Activated T-helper 1 cell treated with anti-CD3 and anti-CD28 coated beads, Interleukin-12 subunit alpha, Interleukin-12 subunit beta, Interleukin-2, Interleukin-4 antibody, amounts not matched to agents 30 ng/mL and 10 ng/mL and 1 ng/mL, durations not matched to agents 14 hours and 24 hours and 36 hours (primary cell): ENCODE measurements at regions of chr17 and their contacts with region 1.

Region 1: GRCh38 chr17:42577532-42578281 is at the start of gene PSMC3IP:
- DNase-seq: peak; percentile 92
- H3K4me3 Mint-ChIP-seq: peak within 1 kb of the TSS; percentile 98
- H3K27ac Mint-ChIP-seq: peak within 1 kb of the TSS; percentile 96
- H3K4me1 Mint-ChIP-seq: peaks cover 47% of the 10 kb centered on the region
- H3K27me3 Mint-ChIP-seq: no peaks in the 10 kb centered on the region
- total RNA-seq, gene PSMC3IP: 27.6 and 31.5 TPM in 2 replicates

Region 2: GRCh38 chr17:42428141-42428944 is 149.4 kb before region 1 on chr17:
- intact Hi-C with region 1: no loop called
- DNase-seq: peak; percentile 16
- H3K4me3 Mint-ChIP-seq: no peak overlapping the region
- H3K27ac Mint-ChIP-seq: no peak overlapping the region
- H3K4me1 Mint-ChIP-seq: no peaks in the 10 kb centered on the region
- H3K27me3 Mint-ChIP-seq: peaks cover 50% of the 10 kb centered on the region

Region 3: GRCh38 chr17:42536048-42536371 is 41.7 kb before region 1 on chr17 and contains the start of gene NAGLU:
- intact Hi-C with region 1: loop called (anchors 1 kb)
- DNase-seq: peak; percentile 85
- H3K4me3 Mint-ChIP-seq: peak within 1 kb of the TSS; percentile 90
- H3K27ac Mint-ChIP-seq: peak within 1 kb of the TSS; percentile 89
- H3K4me1 Mint-ChIP-seq: peaks cover 33% of the 10 kb centered on the region
- H3K27me3 Mint-ChIP-seq: peaks cover 16% of the 10 kb centered on the region
- total RNA-seq, gene NAGLU: 18.2 and 20.8 TPM in 2 replicates

Region 4: DNA sequence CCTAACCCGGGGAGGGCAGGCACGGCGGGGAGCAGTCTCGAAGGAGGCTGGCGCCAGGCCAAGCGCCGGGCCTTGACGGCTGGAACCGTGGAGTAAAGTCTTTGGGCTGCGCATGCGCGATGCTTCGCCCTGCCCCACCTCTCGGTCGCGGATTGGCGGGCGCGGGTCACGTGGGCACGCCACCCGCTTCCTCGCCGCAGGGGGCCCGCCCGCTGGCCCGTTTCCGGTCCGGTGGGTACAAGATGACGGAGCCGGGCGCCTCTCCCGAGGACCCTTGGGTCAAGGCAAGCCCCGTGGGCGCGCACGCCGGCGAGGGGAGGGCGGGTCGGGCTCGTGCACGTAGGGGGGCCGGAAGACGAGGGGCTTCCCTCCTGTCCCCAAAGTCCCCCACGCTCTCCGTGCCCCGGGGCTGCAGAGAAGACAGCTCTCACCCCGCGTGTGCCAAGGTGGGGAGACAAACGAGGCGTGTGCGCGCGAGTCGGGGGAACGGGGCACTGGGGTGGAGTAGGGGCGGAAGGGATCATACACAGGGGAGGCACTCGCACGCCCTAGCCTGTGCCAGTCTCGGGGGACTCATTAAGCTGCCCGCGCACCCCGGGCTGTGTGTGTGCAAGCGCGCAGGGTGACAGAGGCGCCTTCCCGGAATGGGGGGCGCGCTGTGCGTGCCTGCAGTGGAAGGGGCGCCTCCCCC is 10.7 kb before region 1 on chr17 and contains the start of gene MLX:
- intact Hi-C with region 1: loop called (anchors 1 kb)
- DNase-seq: peak; percentile 91
- H3K4me3 Mint-ChIP-seq: peak within 1 kb of the TSS; percentile 89
- H3K27ac Mint-ChIP-seq: peak within 1 kb of the TSS; percentile 87
- H3K4me1 Mint-ChIP-seq: peaks cover 36% of the 10 kb centered on the region
- H3K27me3 Mint-ChIP-seq: no peaks in the 10 kb centered on the region
- total RNA-seq, gene MLX: 74.1 and 75.4 TPM in 2 replicates

Region 5: GRCh38 chr17:42603318-42603717 is 25.6 kb after region 1 on chr17:
- intact Hi-C with region 1: no loop called
- DNase-seq: no peak
- H3K4me3 Mint-ChIP-seq: no peak overlapping the region
- H3K27ac Mint-ChIP-seq: no peak overlapping the region
- H3K4me1 Mint-ChIP-seq: peaks cover 39% of the 10 kb centered on the region
- H3K27me3 Mint-ChIP-seq: no peaks in the 10 kb centered on the region

Region 6: GRCh38 chr17:42720996-42721583 is 143.4 kb after region 1 on chr17:
- intact Hi-C with region 1: loop called (anchors 1 kb)
- DNase-seq: peak; percentile 9
- H3K4me3 Mint-ChIP-seq: no peak overlapping the region
- H3K27ac Mint-ChIP-seq: peak overlapping the region; percentile 22
- H3K4me1 Mint-ChIP-seq: peaks cover 5% of the 10 kb centered on the region
- H3K27me3 Mint-ChIP-seq: no peaks in the 10 kb centered on the region

Region 7: GRCh38 chr17:42760652-42761581 is 183.2 kb after region 1 on chr17 and contains the start of gene RAMP2:
- intact Hi-C with region 1: loop called (anchors 1 kb)
- DNase-seq: no peak
- H3K4me3 Mint-ChIP-seq: peak within 1 kb of the TSS; percentile 54
- H3K27ac Mint-ChIP-seq: no peak within 1 kb of the TSS
- H3K4me1 Mint-ChIP-seq: peaks cover 6% of the 10 kb centered on the region
- H3K27me3 Mint-ChIP-seq: peaks cover 55% of the 10 kb centered on the region
- total RNA-seq, gene RAMP2: not detected in 2 replicates

Region 8: DNA sequence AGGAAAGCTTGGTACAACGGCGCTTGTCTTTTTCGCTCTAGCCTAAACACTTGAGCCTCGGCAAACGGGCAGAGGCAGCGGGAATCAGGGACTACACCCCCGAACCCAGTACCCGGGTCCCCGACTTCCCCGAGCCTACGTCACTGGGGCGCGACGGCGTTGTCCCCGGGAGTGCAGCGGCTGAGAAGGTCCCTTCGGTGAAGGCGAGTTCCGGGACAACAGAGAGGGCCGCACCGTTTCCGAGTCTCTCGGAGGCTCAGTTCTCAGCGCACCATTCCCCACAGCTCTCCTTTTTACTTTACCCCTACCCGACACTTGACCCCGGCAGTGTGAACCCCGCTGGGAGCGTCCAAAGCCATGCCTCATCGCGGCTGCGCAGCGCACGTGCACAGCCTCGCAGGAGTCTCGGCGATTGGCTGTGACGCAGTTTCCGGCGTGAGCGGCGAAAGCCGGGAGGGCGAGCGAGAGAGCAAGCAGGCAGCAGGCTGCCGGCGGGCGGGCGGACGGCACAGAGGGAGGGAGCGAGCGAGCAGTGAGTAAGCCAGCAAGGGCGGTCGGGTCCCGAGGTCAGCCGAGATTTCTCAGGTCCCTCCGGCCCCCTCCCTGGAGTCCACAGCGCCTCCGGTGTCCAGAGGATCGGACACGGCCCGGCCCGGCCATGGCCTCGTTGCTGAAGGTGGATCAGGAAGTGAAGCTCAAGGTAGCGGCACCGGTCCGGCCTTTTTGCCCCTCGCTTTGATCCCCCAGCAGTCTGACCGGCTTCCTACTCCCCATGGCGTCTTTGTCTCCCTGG is 255.5 kb after region 1 on chr17 and contains the start of gene PSME3:
- intact Hi-C with region 1: loop called (anchors 2 kb)
- DNase-seq: peak; percentile 88
- H3K4me3 Mint-ChIP-seq: peak within 1 kb of the TSS; percentile 90
- H3K27ac Mint-ChIP-seq: peak within 1 kb of the TSS; percentile 93
- H3K4me1 Mint-ChIP-seq: peaks cover 23% of the 10 kb centered on the region
- H3K27me3 Mint-ChIP-seq: peaks cover 3% of the 10 kb centered on the region
- total RNA-seq, gene PSME3: 217 and 220 TPM in 2 replicates

Region 9: DNA sequence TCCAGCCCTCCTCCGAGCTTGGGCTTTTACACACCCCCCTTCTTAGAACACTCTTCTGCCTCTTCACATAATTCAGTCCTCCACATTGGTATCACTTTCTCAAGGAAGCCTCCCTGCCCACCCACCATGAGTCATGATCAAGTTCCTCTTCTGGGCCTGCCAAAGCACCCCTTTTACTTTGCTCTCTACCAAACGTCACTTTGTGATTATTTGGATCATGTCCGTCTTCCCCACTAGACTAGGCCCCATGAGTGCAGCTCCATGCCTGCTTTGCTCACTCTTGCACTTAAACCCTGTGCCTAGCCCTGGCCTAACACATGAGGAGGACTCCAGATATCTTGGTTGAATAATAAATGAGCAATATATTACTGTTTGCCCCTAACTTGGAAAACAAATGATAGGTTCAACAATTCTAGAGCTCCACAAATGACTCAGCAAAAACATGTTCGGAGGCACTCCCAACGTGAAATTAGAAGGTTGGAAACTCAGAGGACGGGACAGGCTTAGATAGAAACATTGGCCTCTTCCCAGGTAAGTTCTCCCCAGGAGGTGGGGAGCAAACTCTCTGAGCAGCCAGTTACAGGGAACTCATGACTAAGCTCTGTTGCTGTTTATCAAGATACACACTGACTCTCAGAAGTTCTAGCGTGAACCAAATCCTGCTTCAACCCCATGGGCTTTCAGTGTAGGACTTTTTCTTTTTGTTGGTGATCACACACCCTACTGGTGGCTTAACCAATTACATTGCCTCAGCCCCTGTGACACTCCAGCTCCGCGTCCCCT is 351.2 kb after region 1 on chr17:
- intact Hi-C with region 1: loop called (anchors 5 kb)
- DNase-seq: no peak
- H3K4me3 Mint-ChIP-seq: no peak overlapping the region
- H3K27ac Mint-ChIP-seq: peak overlapping the region; percentile 47
- H3K4me1 Mint-ChIP-seq: peaks cover 11% of the 10 kb centered on the region
- H3K27me3 Mint-ChIP-seq: peaks cover 5% of the 10 kb centered on the region